CD4-positive, alpha-beta T cell (primary cell): ENCODE measurements at regions of chr2 and their contacts with region 1.

Region 1: DNA sequence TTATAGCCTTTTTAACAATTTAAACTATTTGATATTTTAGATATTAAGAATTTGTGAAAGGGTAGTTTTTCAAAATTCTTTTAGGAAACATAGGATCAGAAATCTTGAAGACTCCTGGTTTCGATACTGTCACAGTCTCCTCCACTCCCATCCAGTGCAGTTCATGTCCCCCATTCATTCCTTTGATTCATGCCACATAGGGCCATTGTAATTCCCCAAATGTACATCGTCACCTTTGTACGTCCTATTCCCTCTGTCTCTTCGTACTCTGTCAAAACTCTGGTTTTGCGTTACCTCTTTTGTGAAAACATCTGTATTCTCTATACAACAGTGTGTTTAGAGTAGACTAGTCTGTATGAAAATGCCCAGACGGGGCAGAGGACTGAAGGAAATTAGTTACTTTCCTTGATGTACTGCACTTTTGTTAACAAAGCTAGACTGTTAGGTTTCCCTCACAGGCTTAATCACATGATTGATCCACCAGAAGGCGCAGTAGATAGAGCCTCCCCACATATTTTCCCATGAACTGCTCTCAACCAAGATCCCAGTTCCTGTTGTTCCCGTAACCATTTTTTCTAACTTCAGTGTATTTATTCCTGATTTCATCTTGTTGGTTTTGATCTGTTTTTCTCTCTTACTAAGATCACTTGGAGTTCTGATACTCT is 2.5 kb downstream of the MRPL35 start:
- DNase-seq: no peak
- ATAC-seq: no peak
- H3K4me3 ChIP-seq: no peak overlapping the region
- H3K4me3 Mint-ChIP-seq: peak overlapping the region; percentile 72
- H3K27ac ChIP-seq: no peak overlapping the region
- H3K27ac Mint-ChIP-seq: peak overlapping the region; percentile 4
- H3K4me1 ChIP-seq: peaks cover 12% of the 10 kb centered on the region
- H3K4me1 Mint-ChIP-seq: peaks cover 46% of the 10 kb centered on the region
- H3K27me3 ChIP-seq: no peaks in the 10 kb centered on the region
- H3K27me3 Mint-ChIP-seq: no peaks in the 10 kb centered on the region
- CTCF ChIP-seq: no peak

Region 2: GRCh38 chr2:86170449-86170848 is 31.4 kb before region 1 on chr2:
- CTCF ChIA-PET with region 1: no interaction called
- POLR2A ChIA-PET with region 1: no interaction called
- intact Hi-C with region 1: loop called in 1 of 2 experiments (anchors 1 kb)
- DNase-seq: no peak
- ATAC-seq: no peak
- H3K4me3 ChIP-seq: no peak overlapping the region
- H3K4me3 Mint-ChIP-seq: no peak overlapping the region
- H3K27ac ChIP-seq: no peak overlapping the region
- H3K27ac Mint-ChIP-seq: no peak overlapping the region
- H3K4me1 ChIP-seq: no peaks in the 10 kb centered on the region
- H3K4me1 Mint-ChIP-seq: peaks cover 13% of the 10 kb centered on the region
- H3K27me3 ChIP-seq: no peaks in the 10 kb centered on the region
- H3K27me3 Mint-ChIP-seq: no peaks in the 10 kb centered on the region
- CTCF ChIP-seq: no peak

Region 3: GRCh38 chr2:86219896-86220295 is 18.1 kb after region 1 on chr2:
- CTCF ChIA-PET with region 1: no interaction called
- POLR2A ChIA-PET with region 1: no interaction called
- intact Hi-C with region 1: no loop called
- DNase-seq: no peak
- ATAC-seq: no peak
- H3K4me3 ChIP-seq: no peak overlapping the region
- H3K4me3 Mint-ChIP-seq: no peak overlapping the region
- H3K27ac ChIP-seq: no peak overlapping the region
- H3K27ac Mint-ChIP-seq: no peak overlapping the region
- H3K4me1 ChIP-seq: peaks cover 8% of the 10 kb centered on the region
- H3K4me1 Mint-ChIP-seq: peaks cover 21% of the 10 kb centered on the region
- H3K27me3 ChIP-seq: no peaks in the 10 kb centered on the region
- H3K27me3 Mint-ChIP-seq: no peaks in the 10 kb centered on the region
- CTCF ChIP-seq: no peak